ENCODE measurements at regions of chr1 and their contacts with region 1.

Region 1: GRCh38 chr1:10494754-10495474 is 20.2 kb downstream of the PEX14 start:
- DNase-seq: no peak
- H3K4me3 ChIP-seq: peak overlapping the region; percentile 14
- CTCF ChIP-seq: peak; percentile 86

Region 2: DNA sequence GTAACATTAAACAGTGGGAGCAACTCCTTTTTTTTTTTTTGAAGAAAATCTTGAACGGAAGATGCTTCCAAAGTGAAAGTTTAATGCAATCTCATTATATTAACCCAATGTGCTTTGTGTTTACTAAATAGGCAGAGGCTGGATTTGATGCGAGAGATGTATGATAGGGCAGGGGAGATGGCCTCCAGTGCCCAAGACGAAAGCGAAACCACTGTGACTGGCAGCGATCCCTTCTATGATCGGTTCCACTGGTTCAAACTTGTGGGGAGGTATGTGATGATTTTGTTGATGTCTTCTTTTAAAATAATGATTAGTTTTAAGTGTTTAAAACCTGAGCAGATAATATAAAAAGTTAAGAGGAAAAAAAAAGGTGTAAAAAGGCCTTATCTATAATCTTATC is 170.3 kb before region 1 on chr1:
- in situ Hi-C with region 1: loop called (anchors 10 kb)
- DNase-seq: no peak
- H3K4me3 ChIP-seq: no peak overlapping the region
- CTCF ChIP-seq: no peak

Region 3: GRCh38 chr1:10429868-10430215 is 65.1 kb before region 1 on chr1:
- in situ Hi-C with region 1: loop called (anchors 10 kb)
- DNase-seq: no peak
- H3K4me3 ChIP-seq: peak overlapping the region; percentile 62
- CTCF ChIP-seq: no peak

Region 4: DNA sequence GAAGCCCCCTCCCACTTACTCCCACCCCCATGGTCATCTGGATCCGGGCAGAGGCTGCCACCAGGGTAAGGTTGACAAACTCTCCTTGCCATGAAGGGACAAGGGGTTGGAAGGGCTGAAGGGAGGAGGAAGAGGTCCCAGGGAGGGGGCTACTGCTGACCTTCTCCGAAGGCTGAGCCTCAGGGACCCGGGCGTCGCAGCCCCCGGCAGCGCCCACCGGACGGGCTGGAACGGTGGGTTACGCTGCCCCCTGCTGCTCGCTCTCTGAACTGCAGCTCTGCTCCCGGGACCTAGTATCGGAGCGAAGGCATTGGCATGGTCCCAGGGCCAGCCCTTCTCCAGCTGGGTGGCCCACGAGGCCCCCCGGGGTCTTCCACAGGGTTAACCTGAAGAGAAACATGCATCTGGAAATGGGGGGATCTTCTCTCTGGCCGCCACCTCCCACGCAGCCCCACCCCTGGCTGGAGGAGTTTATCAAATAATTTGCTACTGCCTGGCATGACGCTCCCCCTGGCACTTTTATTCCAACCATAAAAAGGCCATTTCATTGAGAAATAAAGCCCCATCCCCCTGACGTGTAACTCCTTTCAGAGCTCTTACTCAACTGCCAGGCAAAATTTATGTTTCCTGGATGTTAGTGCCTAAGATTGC is 447.1 kb after region 1 on chr1:
- in situ Hi-C with region 1: loop called (anchors 10 kb)
- DNase-seq: no peak
- H3K4me3 ChIP-seq: no peak overlapping the region
- CTCF ChIP-seq: peak; percentile 94

Measured in astrocyte of the cerebellum (primary cell).